GM10248 (cell line): ENCODE measurements at regions of chr10 and their contacts with region 1.

Region 1: DNA sequence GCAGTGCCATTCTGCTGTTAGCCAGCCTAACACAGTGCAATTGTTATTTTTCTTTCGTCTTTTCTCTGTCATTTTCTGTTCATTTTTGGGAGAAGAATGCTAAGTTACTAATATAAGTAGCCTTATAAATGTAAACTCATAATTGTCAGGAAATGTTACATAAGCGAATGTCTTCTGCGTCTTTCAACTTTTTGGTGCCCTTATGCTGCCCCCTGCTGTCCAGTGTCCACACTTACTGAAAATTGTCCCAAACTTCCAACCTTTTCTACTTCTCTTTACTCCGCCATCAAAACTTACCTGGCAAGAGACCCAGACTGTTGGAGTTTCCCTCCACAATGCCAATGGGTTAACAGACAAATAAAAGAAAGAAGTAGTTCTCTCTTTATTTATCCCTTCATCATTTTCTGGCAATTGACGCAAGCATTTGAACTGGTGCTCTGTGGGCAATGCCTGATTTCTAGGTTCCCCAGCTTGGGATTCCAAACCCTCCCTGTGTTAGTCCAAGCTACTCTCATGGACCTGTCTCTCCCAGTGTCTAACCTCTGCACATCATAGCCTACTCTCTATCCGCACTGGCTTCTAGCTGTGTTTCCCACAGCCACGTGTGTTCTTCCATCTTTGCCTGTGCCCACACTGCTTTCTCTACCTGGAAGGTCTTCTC is 21.0 kb upstream of the EPC1 start:
- DNase-seq: peak; percentile 57
- CTCF ChIP-seq: peak; percentile 60

Region 2: GRCh38 chr10:32112055-32112454 is 255.9 kb before region 1 on chr10:
- CTCF ChIA-PET with region 1: no interaction called
- POLR2A ChIA-PET with region 1: no interaction called
- DNase-seq: no peak
- CTCF ChIP-seq: no peak

Region 3: GRCh38 chr10:32190890-32191491 is 176.9 kb before region 1 on chr10:
- CTCF ChIA-PET with region 1: interaction called, 54 read pairs
- POLR2A ChIA-PET with region 1: no interaction called
- DNase-seq: peak; percentile 57
- CTCF ChIP-seq: peak; percentile 67

Region 4: DNA sequence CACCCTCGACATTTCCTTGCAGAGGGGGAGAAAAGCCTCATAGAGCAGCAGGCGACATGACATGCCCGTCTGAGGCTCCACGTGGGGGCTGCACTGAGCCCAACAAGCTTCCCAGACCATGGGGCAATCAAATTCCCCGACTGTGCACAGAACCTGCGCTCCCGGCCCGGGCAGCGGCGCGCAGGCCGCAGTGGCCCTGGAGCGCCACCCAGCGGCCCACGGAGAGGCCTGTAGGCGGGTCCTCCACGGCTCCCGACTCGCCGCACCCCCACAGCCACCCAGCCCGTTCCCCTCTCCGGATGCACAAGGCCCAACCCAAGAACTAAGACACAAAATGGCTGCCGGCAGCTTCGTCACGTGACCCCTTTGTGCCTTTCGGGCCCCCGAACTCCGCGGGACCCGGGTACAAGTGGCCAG is 21.8 kb before region 1 on chr10:
- CTCF ChIA-PET with region 1: interaction called, 12 read pairs
- POLR2A ChIA-PET with region 1: no interaction called
- DNase-seq: peak; percentile 94
- CTCF ChIP-seq: peak; percentile 86

Region 5: DNA sequence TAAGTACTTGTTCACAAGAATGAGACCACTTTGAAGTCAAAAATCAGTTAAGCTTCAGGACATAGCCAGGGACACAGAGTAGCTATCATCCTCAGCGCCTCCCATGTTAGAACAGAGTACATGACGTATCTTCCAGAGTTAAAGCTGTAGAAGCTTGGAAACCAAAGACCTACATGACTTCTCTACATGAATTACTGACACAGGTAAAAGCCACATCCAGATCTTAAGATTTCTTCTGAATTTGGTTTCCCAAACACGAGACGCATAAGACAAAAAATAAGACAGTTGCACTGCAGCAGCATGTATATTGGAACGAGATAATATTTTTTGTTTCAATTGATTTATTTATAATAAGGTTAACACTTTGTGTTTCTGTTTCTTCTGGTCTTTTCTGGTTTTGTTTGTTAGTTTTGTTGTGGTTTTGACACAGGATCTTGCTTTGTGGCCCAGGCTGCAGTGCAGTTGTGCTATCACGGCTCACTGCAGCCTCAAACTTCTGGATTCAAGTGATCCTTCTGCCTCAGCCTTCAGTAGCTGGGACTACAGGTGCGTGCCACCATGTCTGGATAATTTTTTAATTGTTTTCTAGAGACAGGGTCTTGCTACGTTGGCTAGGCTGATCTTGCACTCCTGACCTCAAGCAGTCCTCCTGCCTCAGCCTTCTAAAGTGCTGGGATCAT is 10.7 kb before region 1 on chr10:
- CTCF ChIA-PET with region 1: interaction called, 19 read pairs
- POLR2A ChIA-PET with region 1: no interaction called
- DNase-seq: no peak
- CTCF ChIP-seq: no peak

Region 6: GRCh38 chr10:32378363-32379317 is 10.7 kb after region 1 on chr10:
- CTCF ChIA-PET with region 1: interaction called, 24 read pairs
- POLR2A ChIA-PET with region 1: no interaction called
- DNase-seq: peak; percentile 78
- CTCF ChIP-seq: no peak

Region 7: DNA sequence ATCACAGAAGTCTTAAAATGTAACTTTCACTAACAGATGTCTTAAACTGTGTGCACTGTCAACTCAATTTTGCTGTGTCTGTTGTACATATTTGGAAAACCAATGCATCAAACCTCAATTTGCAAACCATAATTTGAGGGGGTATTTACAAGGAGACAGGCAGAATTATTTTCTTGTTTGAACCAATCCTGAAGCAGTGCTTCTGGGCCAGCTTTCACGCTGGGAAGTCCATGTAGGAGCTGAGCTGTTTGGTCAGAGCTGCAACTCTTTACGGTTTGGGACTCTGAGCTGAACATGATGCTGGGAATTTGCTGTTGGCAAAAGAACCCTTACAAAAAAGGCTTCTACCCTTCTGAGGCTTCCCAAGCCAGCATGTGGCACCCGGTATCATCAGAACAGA is 22.3 kb after region 1 on chr10:
- CTCF ChIA-PET with region 1: no interaction called
- POLR2A ChIA-PET with region 1: no interaction called
- DNase-seq: no peak
- CTCF ChIP-seq: no peak